Prostate gland (tissue), 2 donors: ENCODE measurements at regions of chr18 and their contacts with region 1.

Region 1: DNA sequence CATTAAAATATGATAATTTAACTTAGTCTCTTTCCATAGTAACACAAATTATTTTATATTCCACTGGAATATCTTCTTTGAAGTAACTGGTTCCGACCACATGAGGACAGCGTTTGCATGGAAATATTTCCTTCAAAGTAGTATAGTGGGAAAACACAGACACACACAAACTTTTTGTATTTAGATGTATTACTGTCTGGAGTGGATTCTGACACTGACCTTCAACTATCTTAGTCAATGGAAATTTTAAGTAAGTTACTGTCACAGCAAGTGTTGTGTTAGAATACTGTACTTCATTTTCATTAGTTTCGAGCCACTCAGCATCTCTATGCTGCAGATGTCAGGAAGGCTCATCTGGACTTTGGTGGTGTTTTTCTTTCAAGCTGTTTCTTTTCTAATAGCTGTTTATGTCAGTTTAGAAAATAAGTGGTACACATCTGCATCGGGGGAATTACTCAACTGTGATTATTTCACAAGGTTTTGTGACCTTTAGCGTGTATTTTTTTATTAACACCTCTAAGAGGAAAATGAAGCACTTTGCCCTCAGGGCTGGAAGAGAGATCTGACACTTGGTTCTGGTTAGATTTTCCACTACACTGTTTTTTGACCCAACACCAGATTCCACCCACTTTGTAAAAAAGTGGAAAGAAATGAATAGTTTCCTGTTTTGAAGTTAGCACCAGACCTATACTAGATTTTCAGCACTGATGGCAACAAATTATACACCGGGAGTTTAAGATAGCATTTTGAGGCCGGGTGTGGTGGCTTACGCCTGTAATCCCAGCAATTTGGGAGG is 18.9 kb upstream of the THOC1 start:
- DNase-seq: no peak
- H3K4me3 ChIP-seq: no peak overlapping the region
- H3K27ac ChIP-seq: no peak overlapping the region
- H3K4me1 ChIP-seq: no peaks in the 10 kb centered on the region
- H3K27me3 ChIP-seq: no peaks in the 10 kb centered on the region
- CTCF ChIP-seq: peak in 3 of 4 experiments; percentile 39 to 76 (median 70)
- POLR2A ChIP-seq: no peak

Region 2: GRCh38 chr18:140670-141266 is 145.9 kb before region 1 on chr18:
- intact Hi-C with region 1: no loop called
- DNase-seq: no peak
- H3K4me3 ChIP-seq: no peak overlapping the region
- H3K27ac ChIP-seq: no peak overlapping the region
- H3K4me1 ChIP-seq: no peaks in the 10 kb centered on the region
- H3K27me3 ChIP-seq: no peaks in the 10 kb centered on the region
- CTCF ChIP-seq: no peak
- POLR2A ChIP-seq: no peak

Region 3: GRCh38 chr18:616380-616995 is 329.8 kb after region 1 on chr18:
- intact Hi-C with region 1: loop called (anchors 2 kb)
- DNase-seq: no peak
- H3K4me3 ChIP-seq: no peak overlapping the region
- H3K27ac ChIP-seq: no peak overlapping the region
- H3K4me1 ChIP-seq: no peaks in the 10 kb centered on the region
- H3K27me3 ChIP-seq: no peaks in the 10 kb centered on the region
- CTCF ChIP-seq: peak; percentile 27 to 82 (median 74)
- POLR2A ChIP-seq: no peak

Region 4: DNA sequence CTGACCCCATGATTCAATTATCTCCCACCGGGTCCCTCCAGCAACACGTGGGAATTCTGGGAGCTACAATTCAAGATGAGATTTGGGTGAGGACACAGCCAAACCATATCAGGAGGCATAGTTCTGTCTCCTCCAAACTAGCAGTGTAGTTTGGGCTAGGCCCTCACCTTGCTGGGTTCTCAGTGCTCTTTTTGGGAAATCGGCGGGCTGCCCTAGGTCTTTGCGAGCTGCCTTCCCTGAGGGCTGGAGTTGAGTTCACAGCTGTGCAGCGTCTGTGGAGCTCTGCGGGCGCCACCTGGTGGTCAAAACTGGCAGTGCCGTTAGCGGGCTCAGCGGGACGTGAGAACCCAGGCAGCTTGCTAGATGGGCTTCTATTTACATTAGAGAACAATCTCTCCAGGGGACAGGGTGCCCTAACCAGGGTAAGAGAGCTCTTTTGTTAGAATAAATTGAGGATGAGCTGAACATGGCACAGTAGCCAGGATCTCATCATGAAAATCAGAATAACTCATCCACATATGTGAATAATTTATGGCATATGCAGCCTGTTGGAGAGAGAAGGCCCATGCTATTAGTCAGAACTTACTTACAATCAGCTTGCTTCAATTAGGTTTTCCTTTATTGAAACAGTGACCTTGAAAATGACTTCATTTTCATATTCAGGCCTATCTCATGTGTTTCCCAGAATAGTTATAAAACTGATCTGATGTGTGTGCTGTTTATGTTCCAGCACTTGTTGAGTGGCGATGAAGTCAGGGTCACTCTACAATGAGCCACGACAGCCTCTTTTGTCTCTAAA is 552.7 kb after region 1 on chr18:
- intact Hi-C with region 1: loop called (anchors 10 kb)
- DNase-seq: peak; percentile 65
- H3K4me3 ChIP-seq: no peak overlapping the region
- H3K27ac ChIP-seq: no peak overlapping the region
- H3K4me1 ChIP-seq: no peaks in the 10 kb centered on the region
- H3K27me3 ChIP-seq: no peaks in the 10 kb centered on the region
- CTCF ChIP-seq: peak; percentile 79 to 91 (median 84)
- POLR2A ChIP-seq: no peak